GM12878 (cell line): ENCODE measurements at regions of chr16 and their contacts with region 1.

Region 1: GRCh38 chr16:69565671-69566239 is at the start of gene NFAT5:
- DNase-seq: no peak
- ATAC-seq: peak; percentile 40
- H3K4me3 ChIP-seq: peak within 1 kb of the TSS; percentile 97
- H3K27ac ChIP-seq: peak within 1 kb of the TSS; percentile 96
- H3K4me1 ChIP-seq: no peaks in the 10 kb centered on the region; the same call in 1 of the 2 replicates
- H3K27me3 ChIP-seq: no peaks in the 10 kb centered on the region
- CTCF ChIP-seq: no peak
- EP300 ChIP-seq: peak in 1 of 2 experiments; percentile 100; a peak in 2 of 4 replicates
- POLR2A ChIP-seq: peak; percentile 87
- RAD21 ChIP-seq: no peak
- polyA plus RNA-seq, gene NFAT5: 0.58 to 1.9 TPM

Region 2: DNA sequence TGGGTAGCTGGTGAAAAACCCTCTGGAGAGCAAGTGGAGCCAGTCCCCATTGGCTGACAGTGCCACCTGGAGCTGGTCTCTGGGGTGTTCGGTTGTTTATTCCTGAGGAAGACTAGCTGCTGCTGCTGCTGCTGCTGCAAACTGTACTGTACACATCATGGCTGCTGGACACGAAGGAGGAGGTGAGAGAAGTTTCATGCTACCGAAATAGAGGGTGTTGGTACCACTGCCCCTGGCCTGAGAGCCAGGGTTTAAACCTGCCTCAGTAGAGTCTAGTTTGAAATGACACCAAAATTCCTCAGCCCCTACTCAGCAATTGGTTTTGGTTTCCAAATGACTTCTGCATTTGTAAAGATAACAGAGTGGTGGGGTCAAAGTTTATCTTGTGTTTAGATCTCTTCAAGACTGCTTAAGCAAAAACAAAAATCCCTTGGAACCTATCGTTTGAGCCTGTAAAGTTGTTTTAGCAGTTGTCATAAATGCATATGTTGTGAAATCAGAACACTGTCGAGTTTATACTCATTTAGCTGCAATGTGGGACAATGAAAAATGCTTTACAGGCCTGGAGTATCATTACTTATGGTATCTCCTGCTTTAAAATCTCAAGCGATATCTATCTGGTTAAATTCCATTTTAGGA is 100.6 kb before region 1 on chr16:
- CTCF ChIA-PET with region 1: interaction called, 7 read pairs
- POLR2A ChIA-PET with region 1: interaction called, 17 read pairs
- RAD21 ChIA-PET with region 1: interaction called, 28 read pairs
- SMC1A ChIA-PET with region 1: interaction called, 26 read pairs
- in situ Hi-C with region 1: no loop called
- intact Hi-C with region 1: loop called (anchors 1 kb)
- DNase-seq: peak; percentile 59
- ATAC-seq: peak; percentile 67
- H3K4me3 ChIP-seq: no peak overlapping the region
- H3K27ac ChIP-seq: peak overlapping the region; percentile 12
- H3K4me1 ChIP-seq: peaks cover 55% of the 10 kb centered on the region
- H3K27me3 ChIP-seq: no peaks in the 10 kb centered on the region
- CTCF ChIP-seq: peak in 1 of 3 experiments; percentile 5; a peak in 1 of 6 replicates
- EP300 ChIP-seq: peak in 1 of 2 experiments; percentile 53; a peak in 1 of 4 replicates
- POLR2A ChIP-seq: no peak
- RAD21 ChIP-seq: peak; percentile 35; the same call in 1 of the 2 replicates

Region 3: GRCh38 chr16:69520800-69521602 is 44.8 kb before region 1 on chr16:
- CTCF ChIA-PET with region 1: no interaction called
- POLR2A ChIA-PET with region 1: interaction called, 5 read pairs
- RAD21 ChIA-PET with region 1: interaction called, 4 read pairs
- SMC1A ChIA-PET with region 1: interaction called, 10 read pairs
- in situ Hi-C with region 1: no loop called
- intact Hi-C with region 1: loop called (anchors 5 kb)
- DNase-seq: peak; percentile 65
- ATAC-seq: peak; percentile 85
- H3K4me3 ChIP-seq: 0 out of 2 replicates have a peak overlapping the region, but pooled peaks have one; percentile 16
- H3K27ac ChIP-seq: peak overlapping the region; percentile 77
- H3K4me1 ChIP-seq: peaks cover 26% of the 10 kb centered on the region
- H3K27me3 ChIP-seq: no peaks in the 10 kb centered on the region
- CTCF ChIP-seq: no peak
- EP300 ChIP-seq: 0 out of 4 replicates have a peak, but pooled peaks of 1 of the 2 experiments have one; percentile 6
- POLR2A ChIP-seq: no peak
- RAD21 ChIP-seq: no peak

Region 4: DNA sequence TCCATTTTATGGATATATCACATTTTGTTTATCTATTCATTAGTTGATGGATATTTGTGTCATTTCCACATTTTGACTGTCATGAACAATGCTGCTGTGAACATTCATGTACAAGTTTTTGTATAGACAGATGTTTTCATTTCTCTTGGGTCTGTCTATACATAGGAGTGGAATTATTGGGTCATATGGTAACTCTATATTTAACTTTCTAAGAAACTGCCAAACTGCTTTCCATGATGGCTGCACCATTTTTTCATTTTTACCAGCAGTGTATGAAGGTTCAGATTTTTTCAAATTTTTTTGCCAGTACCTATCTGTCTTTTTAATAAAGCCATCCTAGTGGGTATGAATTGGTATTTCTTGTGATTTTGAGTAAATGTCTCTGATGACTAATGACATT is 15.5 kb after region 1 on chr16:
- CTCF ChIA-PET with region 1: interaction called, 12 read pairs
- POLR2A ChIA-PET with region 1: interaction called, 12 read pairs
- RAD21 ChIA-PET with region 1: interaction called, 11 read pairs
- SMC1A ChIA-PET with region 1: interaction called, 14 read pairs
- in situ Hi-C with region 1: no loop called
- intact Hi-C with region 1: no loop called
- DNase-seq: no peak
- ATAC-seq: peak; percentile 28; the same call in 2 of the 3 replicates
- H3K4me3 ChIP-seq: no peak overlapping the region
- H3K27ac ChIP-seq: no peak overlapping the region
- H3K4me1 ChIP-seq: peaks cover 8% of the 10 kb centered on the region; the same call in 1 of the 2 replicates
- H3K27me3 ChIP-seq: no peaks in the 10 kb centered on the region
- CTCF ChIP-seq: no peak
- EP300 ChIP-seq: no peak
- POLR2A ChIP-seq: no peak
- RAD21 ChIP-seq: no peak

Region 5: DNA sequence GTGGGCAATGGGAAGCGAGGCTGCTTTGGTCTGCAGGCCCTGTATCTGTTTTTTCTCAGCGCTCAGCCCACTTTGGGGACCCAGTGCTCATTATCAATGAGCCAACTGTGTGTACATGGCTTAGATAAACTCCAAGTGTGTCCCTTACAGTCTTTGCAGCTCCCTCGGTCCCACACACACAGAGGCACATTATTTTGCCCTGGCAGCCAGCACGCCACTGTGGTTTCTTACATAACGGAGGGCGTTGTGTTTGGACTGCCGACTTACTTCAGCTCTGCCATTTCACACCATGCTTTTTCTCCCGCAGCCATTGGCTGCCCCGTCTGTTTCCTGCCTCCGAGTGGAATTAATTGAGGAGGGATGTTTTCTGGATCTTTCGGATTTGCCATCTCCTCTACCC is 328.9 kb after region 1 on chr16:
- CTCF ChIA-PET with region 1: no interaction called
- POLR2A ChIA-PET with region 1: no interaction called
- RAD21 ChIA-PET with region 1: no interaction called
- SMC1A ChIA-PET with region 1: no interaction called
- in situ Hi-C with region 1: no loop called
- intact Hi-C with region 1: no loop called
- DNase-seq: no peak
- ATAC-seq: no peak
- H3K4me3 ChIP-seq: no peak overlapping the region
- H3K27ac ChIP-seq: no peak overlapping the region
- H3K4me1 ChIP-seq: no peaks in the 10 kb centered on the region
- H3K27me3 ChIP-seq: no peaks in the 10 kb centered on the region
- CTCF ChIP-seq: no peak
- EP300 ChIP-seq: no peak
- POLR2A ChIP-seq: no peak
- RAD21 ChIP-seq: no peak

Region 6: DNA sequence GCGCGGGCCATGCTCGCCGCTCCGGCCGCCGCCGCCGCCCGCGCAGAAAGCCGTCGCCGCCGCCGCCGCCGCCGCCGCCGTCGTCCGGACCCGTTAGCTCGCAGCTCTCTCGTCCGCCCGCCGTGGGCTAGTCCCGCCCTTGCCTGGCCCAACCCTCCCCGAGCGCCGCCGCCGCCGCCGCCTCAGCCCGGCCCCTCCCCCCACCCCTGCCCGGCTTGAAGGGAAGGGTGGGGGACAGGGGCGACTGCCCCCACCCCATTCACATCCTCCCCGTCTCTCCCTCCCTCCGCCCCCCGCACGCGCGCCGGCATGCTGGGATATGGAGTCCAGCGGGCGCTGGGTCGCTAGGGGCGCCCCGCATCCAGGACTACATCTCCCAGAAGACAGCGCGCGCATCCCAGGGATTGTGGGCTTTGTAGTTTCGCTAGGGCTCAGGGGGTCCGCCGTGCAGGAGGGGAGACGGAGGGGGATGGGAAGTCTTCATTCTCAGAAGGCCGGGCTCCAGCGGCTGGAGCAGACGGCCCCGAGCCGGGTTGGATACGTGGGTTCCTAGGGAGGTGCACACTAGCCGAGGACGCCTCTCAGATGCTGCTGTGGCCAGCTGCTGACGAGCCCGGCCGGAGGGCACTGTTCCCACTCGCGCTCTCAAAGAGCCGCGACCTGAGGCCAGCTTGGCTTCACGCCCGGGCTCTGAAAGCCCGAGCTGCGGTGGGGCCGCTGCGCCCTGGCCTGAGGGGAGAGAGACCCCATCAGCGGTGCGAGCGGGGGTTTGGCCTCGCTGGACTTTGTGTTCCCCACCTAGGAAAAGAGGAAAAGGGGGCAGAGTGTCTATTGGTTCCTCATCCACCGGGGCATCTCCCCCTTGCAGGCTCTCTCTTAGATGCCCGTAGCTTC is 873.5 kb after region 1 on chr16 and contains the start of gene ST3GAL2:
- CTCF ChIA-PET with region 1: no interaction called
- POLR2A ChIA-PET with region 1: no interaction called
- RAD21 ChIA-PET with region 1: no interaction called
- SMC1A ChIA-PET with region 1: no interaction called
- in situ Hi-C with region 1: no loop called
- intact Hi-C with region 1: loop called (anchors 10 kb)
- DNase-seq: peak; percentile 74
- ATAC-seq: peak; percentile 91
- H3K4me3 ChIP-seq: peak within 1 kb of the TSS; percentile 88
- H3K27ac ChIP-seq: peak within 1 kb of the TSS; percentile 71
- H3K4me1 ChIP-seq: peaks cover 20% of the 10 kb centered on the region
- H3K27me3 ChIP-seq: no peaks in the 10 kb centered on the region
- CTCF ChIP-seq: 0 out of 6 replicates have a peak, but pooled peaks of 1 of the 3 experiments have one; percentile 2
- EP300 ChIP-seq: no peak
- POLR2A ChIP-seq: peak; percentile 67
- RAD21 ChIP-seq: no peak
- polyA plus RNA-seq, gene ST3GAL2: 0.95 to 1.4 TPM